Activated CD8-positive, alpha-beta T cell treated with anti-CD3 and anti-CD28 coated beads, Interleukin-2, amount 10 ng/mL, durations not matched to agents 7 days and 5 days (primary cell): ENCODE measurements at regions of chr1 and their contacts with region 1.

Region 1: GRCh38 chr1:226121587-226122400 is 59.3 kb downstream of the H3-3A start:
- DNase-seq: peak; percentile 78
- ATAC-seq: peak; percentile 78
- H3K4me3 Mint-ChIP-seq: peak overlapping the region; percentile 78
- H3K27ac Mint-ChIP-seq: peak overlapping the region; percentile 84
- H3K4me1 Mint-ChIP-seq: peaks cover 41% of the 10 kb centered on the region
- H3K27me3 Mint-ChIP-seq: peaks cover 11% of the 10 kb centered on the region

Region 2: GRCh38 chr1:226062558-226063223 is 59.1 kb before region 1 on chr1 and contains the start of gene H3-3A:
- CTCF ChIA-PET with region 1: interaction called, 75 read pairs
- POLR2A ChIA-PET with region 1: interaction called, 10 read pairs
- DNase-seq: peak; percentile 98
- ATAC-seq: peak; percentile 87
- H3K4me3 Mint-ChIP-seq: peak within 1 kb of the TSS; percentile 100
- H3K27ac Mint-ChIP-seq: peak within 1 kb of the TSS; percentile 100
- H3K4me1 Mint-ChIP-seq: peaks cover 37% of the 10 kb centered on the region
- H3K27me3 Mint-ChIP-seq: no peaks in the 10 kb centered on the region
- total RNA-seq, gene H3-3A: 526 to 541 TPM

Region 3: GRCh38 chr1:226109829-226110248 is 12.0 kb before region 1 on chr1:
- CTCF ChIA-PET with region 1: interaction called, 31 read pairs
- POLR2A ChIA-PET with region 1: interaction called, 3 read pairs
- DNase-seq: peak; percentile 85
- ATAC-seq: peak; percentile 87
- H3K4me3 Mint-ChIP-seq: peak overlapping the region; percentile 85
- H3K27ac Mint-ChIP-seq: peak overlapping the region; percentile 85
- H3K4me1 Mint-ChIP-seq: peaks cover 21% of the 10 kb centered on the region
- H3K27me3 Mint-ChIP-seq: peaks cover 3% of the 10 kb centered on the region

Region 4: GRCh38 chr1:226157761-226158316 is 36.0 kb after region 1 on chr1:
- CTCF ChIA-PET with region 1: interaction called, 22 read pairs
- POLR2A ChIA-PET with region 1: no interaction called
- DNase-seq: no peak
- ATAC-seq: no peak
- H3K4me3 Mint-ChIP-seq: no peak overlapping the region
- H3K27ac Mint-ChIP-seq: peak overlapping the region; percentile 37
- H3K4me1 Mint-ChIP-seq: peaks cover 24% of the 10 kb centered on the region
- H3K27me3 Mint-ChIP-seq: no peaks in the 10 kb centered on the region

Region 5: DNA sequence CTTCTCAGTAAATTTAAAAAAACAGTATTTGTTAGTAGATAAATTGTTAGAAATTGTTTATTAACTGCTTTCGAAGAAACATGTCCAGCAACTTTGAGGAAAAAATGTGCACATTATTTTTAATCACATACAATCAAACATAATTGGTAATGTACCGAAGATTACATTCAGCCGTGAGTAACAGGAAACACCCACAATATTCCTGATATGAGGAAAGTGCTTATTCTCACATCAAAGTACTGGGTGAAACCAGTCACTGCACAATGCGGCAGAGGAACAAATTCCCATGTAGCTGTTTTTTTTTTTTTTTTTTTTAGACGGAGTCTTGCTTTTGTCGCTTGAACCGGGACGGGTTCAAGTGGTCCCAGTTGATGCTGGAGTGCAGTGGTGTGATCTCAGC is 55.1 kb after region 1 on chr1:
- CTCF ChIA-PET with region 1: interaction called, 27 read pairs
- POLR2A ChIA-PET with region 1: no interaction called
- DNase-seq: no peak
- ATAC-seq: no peak
- H3K4me3 Mint-ChIP-seq: no peak overlapping the region
- H3K27ac Mint-ChIP-seq: no peak overlapping the region
- H3K4me1 Mint-ChIP-seq: peaks cover 10% of the 10 kb centered on the region
- H3K27me3 Mint-ChIP-seq: no peaks in the 10 kb centered on the region

Region 6: DNA sequence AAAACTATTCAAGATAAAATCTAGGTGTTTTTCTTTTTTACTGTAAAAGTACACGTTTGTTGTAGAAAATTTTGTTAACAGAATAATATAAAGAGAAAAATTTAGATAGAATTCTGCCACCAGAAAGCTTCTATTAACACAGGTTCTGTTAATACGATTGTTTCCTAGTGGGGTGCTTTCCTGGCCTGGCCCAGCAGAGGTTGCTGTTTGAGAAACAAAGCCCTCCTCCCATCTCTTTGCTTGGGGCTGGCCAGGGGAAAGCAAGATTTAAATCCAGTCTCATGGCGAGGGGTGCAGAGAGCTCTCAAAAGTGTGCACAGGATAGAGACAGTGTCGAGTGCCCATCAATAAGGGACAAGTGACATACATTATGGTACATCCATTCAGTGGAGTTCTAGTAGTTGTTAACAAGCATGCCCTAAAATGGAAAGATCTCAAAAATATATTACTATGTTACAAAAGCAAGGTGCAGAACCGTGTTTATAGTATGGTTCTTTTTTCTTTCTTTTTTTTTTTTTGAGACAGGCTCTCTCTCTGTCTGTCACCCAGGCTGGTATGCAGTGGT is 79.3 kb after region 1 on chr1:
- CTCF ChIA-PET with region 1: interaction called, 208 read pairs
- POLR2A ChIA-PET with region 1: no interaction called
- DNase-seq: no peak
- ATAC-seq: peak; percentile 44
- H3K4me3 Mint-ChIP-seq: no peak overlapping the region
- H3K27ac Mint-ChIP-seq: no peak overlapping the region
- H3K4me1 Mint-ChIP-seq: peaks cover 2% of the 10 kb centered on the region
- H3K27me3 Mint-ChIP-seq: peaks cover 11% of the 10 kb centered on the region

Region 7: GRCh38 chr1:226332947-226333346 is 211.2 kb after region 1 on chr1:
- CTCF ChIA-PET with region 1: interaction called, 77 read pairs
- POLR2A ChIA-PET with region 1: interaction called, 3 read pairs
- DNase-seq: no peak
- ATAC-seq: no peak
- H3K4me3 Mint-ChIP-seq: peak overlapping the region; percentile 1
- H3K27ac Mint-ChIP-seq: no peak overlapping the region
- H3K4me1 Mint-ChIP-seq: peaks cover 4% of the 10 kb centered on the region
- H3K27me3 Mint-ChIP-seq: peaks cover 5% of the 10 kb centered on the region